Activated T-helper 1 cell treated with anti-CD3 and anti-CD28 coated beads, Interleukin-12 subunit alpha, Interleukin-12 subunit beta, Interleukin-2, Interleukin-4 antibody, amounts not matched to agents 30 ng/mL and 10 ng/mL and 1 ng/mL, durations not matched to agents 14 hours and 24 hours and 36 hours (primary cell): ENCODE measurements at regions of chr3 and their contacts with region 1.

Region 1: GRCh38 chr3:154316974-154317767 is 7.1 kb downstream of the DHX36 start:
- DNase-seq: no peak
- H3K4me3 Mint-ChIP-seq: peak overlapping the region; percentile 46
- H3K27ac Mint-ChIP-seq: peak overlapping the region; percentile 69
- H3K4me1 Mint-ChIP-seq: peaks cover 12% of the 10 kb centered on the region
- H3K27me3 Mint-ChIP-seq: no peaks in the 10 kb centered on the region

Region 2: DNA sequence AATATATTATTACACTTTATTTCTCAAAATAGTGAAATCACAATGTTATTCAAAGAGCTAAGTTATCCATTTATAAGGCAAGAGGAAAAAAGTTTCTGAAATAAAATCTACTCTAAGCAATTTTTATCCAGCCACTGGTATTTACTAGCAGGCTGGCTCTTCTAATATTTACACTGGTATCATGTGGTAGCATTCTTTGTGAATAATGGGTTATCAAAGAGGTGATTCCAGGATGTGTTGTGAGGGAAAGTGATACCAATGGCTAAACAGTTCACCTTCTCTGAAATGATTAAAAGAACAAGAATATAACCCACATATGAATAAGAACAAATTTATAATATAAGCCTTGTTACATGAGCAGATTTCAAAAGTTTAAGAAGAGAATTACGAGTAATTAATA is 37.0 kb before region 1 on chr3:
- intact Hi-C with region 1: loop called (anchors 5 kb)
- DNase-seq: no peak
- H3K4me3 Mint-ChIP-seq: no peak overlapping the region
- H3K27ac Mint-ChIP-seq: no peak overlapping the region
- H3K4me1 Mint-ChIP-seq: no peaks in the 10 kb centered on the region
- H3K27me3 Mint-ChIP-seq: no peaks in the 10 kb centered on the region

Region 3: GRCh38 chr3:154301571-154301970 is 15.6 kb before region 1 on chr3:
- intact Hi-C with region 1: loop called (anchors 2 kb)
- DNase-seq: no peak
- H3K4me3 Mint-ChIP-seq: no peak overlapping the region
- H3K27ac Mint-ChIP-seq: no peak overlapping the region
- H3K4me1 Mint-ChIP-seq: peaks cover 2% of the 10 kb centered on the region
- H3K27me3 Mint-ChIP-seq: no peaks in the 10 kb centered on the region